Endothelial cell of umbilical vein (primary cell): ENCODE measurements at regions of chr10 and their contacts with region 1.

Region 1: DNA sequence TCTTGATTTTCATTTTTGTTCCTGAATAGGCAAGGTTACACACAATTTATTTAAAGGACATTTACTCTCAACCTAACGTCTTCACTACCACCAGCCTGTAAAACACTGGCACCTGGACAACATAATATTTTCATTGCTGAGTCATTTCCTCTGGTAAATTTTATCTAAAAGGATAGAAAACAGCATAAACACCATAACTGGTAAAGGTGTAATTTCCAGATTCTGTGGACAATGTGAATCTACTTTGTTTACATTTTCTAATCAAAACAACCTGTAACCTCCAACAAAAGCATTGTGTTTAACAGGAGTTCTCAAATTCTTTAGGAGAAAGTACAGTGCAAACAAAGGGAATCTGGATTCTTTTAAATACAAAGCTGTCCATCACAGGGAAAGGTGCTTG is 472.0 kb upstream of the AKR1E2 start:
- DNase-seq: peak; percentile 96
- H3K4me3 ChIP-seq: no peak overlapping the region
- H3K27ac ChIP-seq: peak overlapping the region; percentile 94
- H3K4me1 ChIP-seq: peaks cover 46% of the 10 kb centered on the region
- H3K27me3 ChIP-seq: no peaks in the 10 kb centered on the region
- CTCF ChIP-seq: no peak
- POLR2A ChIP-seq: no peak

Region 2: DNA sequence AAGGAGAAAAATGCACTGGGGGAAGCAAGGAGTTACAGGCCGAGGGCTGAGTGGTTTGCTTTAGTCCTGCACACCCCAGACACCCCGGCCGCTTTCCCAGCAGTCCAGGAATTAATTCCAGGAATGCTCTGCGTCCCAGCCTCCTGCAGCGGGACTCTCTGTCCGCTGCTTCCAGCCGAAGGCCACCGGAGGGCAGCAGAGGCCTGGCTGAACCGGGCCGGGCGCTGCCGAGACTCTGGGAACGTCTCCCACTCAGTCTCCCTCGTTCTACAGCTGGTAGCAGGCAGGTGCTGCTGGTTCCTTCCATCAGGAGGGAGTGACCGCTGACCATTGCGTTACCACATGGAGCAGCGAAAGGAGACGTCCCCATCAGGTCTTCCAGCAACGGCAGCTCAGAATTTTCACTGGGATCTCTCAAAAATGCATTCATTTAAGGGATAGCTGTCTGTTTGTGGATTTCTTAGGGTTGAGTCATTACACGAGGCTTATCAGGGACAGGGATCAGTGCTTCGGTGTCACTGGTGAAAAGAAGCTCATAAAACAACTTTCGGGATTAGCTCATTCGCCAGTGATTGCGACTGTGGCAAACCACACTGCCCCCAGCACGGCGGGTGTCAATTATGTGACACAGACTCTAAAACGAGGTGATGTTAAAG is 1156.5 kb before region 1 on chr10:
- CTCF ChIA-PET with region 1: interaction called, 3 read pairs
- POLR2A ChIA-PET with region 1: no interaction called
- dilution Hi-C with region 1: no loop called
- intact Hi-C with region 1: loop called (anchors 10 kb)
- DNase-seq: peak; percentile 86
- H3K4me3 ChIP-seq: peak overlapping the region in 2 of 3 experiments; percentile 1 to 6
- H3K27ac ChIP-seq: no peak overlapping the region
- H3K4me1 ChIP-seq: peaks cover 12% of the 10 kb centered on the region
- H3K27me3 ChIP-seq: peaks cover 0 to 6% of the 10 kb centered on the region in 2 experiments
- CTCF ChIP-seq: peak; percentile 93 to 96
- POLR2A ChIP-seq: no peak

Region 3: GRCh38 chr10:3805791-3806461 is 548.0 kb before region 1 on chr10:
- CTCF ChIA-PET with region 1: no interaction called
- POLR2A ChIA-PET with region 1: no interaction called
- dilution Hi-C with region 1: no loop called
- intact Hi-C with region 1: loop called (anchors 1 kb)
- DNase-seq: peak; percentile 96
- H3K4me3 ChIP-seq: peak overlapping the region in 1 of 3 experiments; percentile 31
- H3K27ac ChIP-seq: peak overlapping the region; percentile 100
- H3K4me1 ChIP-seq: peaks cover 70% of the 10 kb centered on the region
- H3K27me3 ChIP-seq: no peaks in the 10 kb centered on the region
- CTCF ChIP-seq: no peak
- POLR2A ChIP-seq: peak; percentile 29

Region 4: DNA sequence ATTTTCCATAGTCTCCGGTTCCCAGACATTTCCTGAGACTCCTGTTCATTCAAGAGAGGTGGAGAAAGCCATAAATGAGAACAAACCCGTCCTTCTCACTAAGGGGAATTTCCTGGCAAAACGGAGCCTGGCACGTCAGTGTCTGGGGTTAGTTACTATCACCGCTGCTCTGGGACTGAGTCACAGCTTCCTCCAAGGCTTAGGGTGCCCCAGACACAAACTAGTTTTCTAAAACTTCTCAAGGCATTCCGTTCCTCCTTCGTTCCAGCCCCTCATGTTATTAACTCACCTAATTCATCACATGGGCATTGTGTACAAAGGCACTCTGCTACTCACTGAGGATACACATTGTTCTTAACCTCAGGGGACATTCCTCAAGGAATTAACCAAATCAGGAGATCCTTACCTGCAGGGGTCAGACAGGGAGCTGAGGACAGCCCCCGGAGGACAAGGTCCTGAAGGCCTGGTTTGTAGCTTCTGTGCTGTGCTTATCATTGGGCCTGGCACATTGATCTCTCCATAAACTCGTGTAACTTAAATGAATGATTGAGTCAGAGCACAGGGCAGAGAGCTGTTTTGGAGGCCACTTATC is 466.0 kb before region 1 on chr10:
- CTCF ChIA-PET with region 1: no interaction called
- POLR2A ChIA-PET with region 1: no interaction called
- dilution Hi-C with region 1: no loop called
- intact Hi-C with region 1: loop called (anchors 5 kb)
- DNase-seq: peak; percentile 97
- H3K4me3 ChIP-seq: peak overlapping the region in 1 of 3 experiments; percentile 22
- H3K27ac ChIP-seq: peak overlapping the region; percentile 100
- H3K4me1 ChIP-seq: peaks cover 56% of the 10 kb centered on the region
- H3K27me3 ChIP-seq: no peaks in the 10 kb centered on the region
- CTCF ChIP-seq: no peak
- POLR2A ChIP-seq: peak; percentile 65

Region 5: DNA sequence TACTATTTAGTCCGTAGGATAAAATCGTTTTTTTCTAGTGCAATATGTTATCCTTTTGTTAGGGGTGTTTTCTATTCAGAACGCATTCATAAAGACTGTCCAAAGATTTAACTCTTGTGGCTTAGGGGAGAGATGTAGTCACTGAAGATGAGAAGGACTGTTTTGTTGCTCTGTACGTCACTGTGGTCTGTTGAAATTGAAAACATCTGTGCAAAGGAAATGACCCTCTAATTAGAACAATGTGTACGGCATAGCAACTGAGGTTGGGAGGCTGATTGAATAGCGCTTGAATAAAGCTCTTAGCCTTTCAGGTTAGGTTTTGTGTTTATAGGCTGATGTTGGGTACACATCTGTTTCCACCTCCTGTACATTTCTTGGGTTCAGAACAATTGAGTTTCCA is 18.6 kb after region 1 on chr10:
- CTCF ChIA-PET with region 1: interaction called, 4 read pairs
- POLR2A ChIA-PET with region 1: no interaction called
- dilution Hi-C with region 1: no loop called
- intact Hi-C with region 1: loop called (anchors 1 kb)
- DNase-seq: peak; percentile 93
- H3K4me3 ChIP-seq: no peak overlapping the region
- H3K27ac ChIP-seq: peak overlapping the region; percentile 91
- H3K4me1 ChIP-seq: peaks cover 14% of the 10 kb centered on the region
- H3K27me3 ChIP-seq: no peaks in the 10 kb centered on the region
- CTCF ChIP-seq: no peak
- POLR2A ChIP-seq: no peak

Region 6: DNA sequence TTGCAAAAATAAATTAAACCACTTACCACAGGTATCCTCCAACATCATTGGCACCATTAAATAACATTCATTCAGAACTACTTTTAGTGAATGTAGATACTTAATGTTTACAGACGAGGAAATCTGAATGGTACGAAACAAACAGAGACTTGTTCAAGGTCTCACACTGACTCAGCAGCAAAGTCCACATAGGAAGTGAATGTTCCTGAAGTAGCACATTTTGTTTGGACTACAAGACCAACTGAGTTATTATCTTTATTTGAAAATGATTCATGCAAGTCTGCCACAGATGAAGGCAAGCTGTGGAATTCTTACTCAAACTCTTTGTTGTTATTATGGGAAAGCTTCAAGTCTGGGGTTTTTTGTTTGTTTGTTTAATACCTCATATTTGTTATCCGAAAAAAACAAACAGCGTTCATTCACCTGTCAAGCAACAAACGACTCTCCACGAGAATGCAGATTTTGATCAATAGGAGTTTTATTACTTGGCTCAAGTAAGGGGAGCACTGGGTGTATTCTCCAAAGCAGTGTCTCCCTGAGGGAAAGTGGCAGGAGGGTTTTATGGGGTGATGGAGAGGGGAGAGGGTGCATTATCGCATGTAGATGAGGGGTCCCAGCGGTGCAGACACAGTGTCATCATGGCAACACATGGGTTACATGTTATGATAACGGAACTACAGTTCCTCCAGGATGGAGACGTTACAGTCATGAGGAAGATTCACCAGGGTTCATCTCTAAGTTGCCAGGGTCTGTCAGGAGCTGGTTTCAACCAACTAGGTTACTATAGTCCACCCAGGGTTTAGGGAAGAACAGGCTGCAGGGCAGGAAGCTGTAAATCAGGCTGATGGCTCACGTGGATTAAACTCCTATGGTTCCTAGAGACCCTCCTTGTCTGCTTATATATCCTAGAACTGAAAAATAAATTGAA is 324.3 kb after region 1 on chr10:
- CTCF ChIA-PET with region 1: no interaction called
- POLR2A ChIA-PET with region 1: no interaction called
- dilution Hi-C with region 1: no loop called
- intact Hi-C with region 1: loop called (anchors 5 kb)
- DNase-seq: peak; percentile 94
- H3K4me3 ChIP-seq: peak overlapping the region; percentile 32 to 99 (median 71)
- H3K27ac ChIP-seq: peak overlapping the region; percentile 84
- H3K4me1 ChIP-seq: peaks cover 31% of the 10 kb centered on the region
- H3K27me3 ChIP-seq: no peaks in the 10 kb centered on the region
- CTCF ChIP-seq: no peak
- POLR2A ChIP-seq: no peak